Activated T-helper 1 cell treated with anti-CD3 and anti-CD28 coated beads, Interleukin-12 subunit alpha, Interleukin-12 subunit beta, Interleukin-2, Interleukin-4 antibody, amounts not matched to agents 30 ng/mL and 10 ng/mL and 1 ng/mL, durations not matched to agents 14 hours and 24 hours and 36 hours (primary cell): ENCODE measurements at regions of chr10 and their contacts with region 1.

Region 1: GRCh38 chr10:79463578-79464496 is 18.4 kb upstream of the ZCCHC24 start:
- DNase-seq: no peak
- H3K4me3 Mint-ChIP-seq: no peak overlapping the region
- H3K27ac Mint-ChIP-seq: no peak overlapping the region
- H3K4me1 Mint-ChIP-seq: no peaks in the 10 kb centered on the region
- H3K27me3 Mint-ChIP-seq: peaks cover 3% of the 10 kb centered on the region

Region 2: GRCh38 chr10:79292891-79293746 is 170.7 kb before region 1 on chr10:
- intact Hi-C with region 1: loop called (anchors 2 kb)
- DNase-seq: no peak
- H3K4me3 Mint-ChIP-seq: no peak overlapping the region
- H3K27ac Mint-ChIP-seq: no peak overlapping the region
- H3K4me1 Mint-ChIP-seq: peaks cover 46% of the 10 kb centered on the region
- H3K27me3 Mint-ChIP-seq: no peaks in the 10 kb centered on the region

Region 3: GRCh38 chr10:79400146-79401004 is 63.5 kb before region 1 on chr10:
- intact Hi-C with region 1: loop called (anchors 1 kb)
- DNase-seq: peak; percentile 22
- H3K4me3 Mint-ChIP-seq: no peak overlapping the region
- H3K27ac Mint-ChIP-seq: no peak overlapping the region
- H3K4me1 Mint-ChIP-seq: no peaks in the 10 kb centered on the region
- H3K27me3 Mint-ChIP-seq: peaks cover 5% of the 10 kb centered on the region